K562 (cell line): ENCODE measurements at regions of chr6 and their contacts with region 1.

Region 1: DNA sequence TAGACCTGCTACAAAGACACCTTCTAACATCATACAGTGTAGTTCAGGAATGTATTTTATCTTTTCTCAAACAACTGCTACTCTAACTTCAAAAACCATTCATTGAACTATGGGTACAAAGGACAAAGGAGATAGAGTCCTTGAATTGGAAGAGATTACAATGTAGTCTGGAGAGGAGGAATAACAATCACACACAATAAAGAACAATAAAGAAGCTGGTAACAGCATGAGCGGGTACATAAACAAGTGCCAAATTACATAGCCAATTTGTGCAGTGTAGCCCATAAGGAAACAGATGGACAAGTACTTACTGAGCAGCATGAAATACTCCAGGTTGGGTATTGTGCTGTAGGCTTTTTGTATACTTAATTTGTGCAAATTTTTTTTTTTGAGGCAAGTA is 44.3 kb downstream of the OSTM1 start:
- DNase-seq: no peak
- ATAC-seq: no peak
- H3K4me3 ChIP-seq: no peak overlapping the region
- H3K27ac ChIP-seq: no peak overlapping the region
- H3K4me1 ChIP-seq: peaks cover 0 to 3% of the 10 kb centered on the region in 2 experiments; a peak in 1 of 5 replicates
- H3K27me3 ChIP-seq: no peaks in the 10 kb centered on the region
- CTCF ChIP-seq: no peak
- EP300 ChIP-seq: no peak
- POLR2A ChIP-seq: no peak
- RAD21 ChIP-seq: no peak

Region 2: GRCh38 chr6:107689951-107690642 is 340.1 kb before region 1 on chr6:
- CTCF ChIA-PET with region 1: no interaction called
- POLR2A ChIA-PET with region 1: no interaction called
- in situ Hi-C with region 1: loop called (anchors 10 kb)
- intact Hi-C with region 1: no loop called
- DNase-seq: no peak
- ATAC-seq: no peak
- H3K4me3 ChIP-seq: no peak overlapping the region
- H3K27ac ChIP-seq: no peak overlapping the region
- H3K4me1 ChIP-seq: no peaks in the 10 kb centered on the region; a peak in 1 of 5 replicates
- H3K27me3 ChIP-seq: peaks cover 9 to 38% of the 10 kb centered on the region in 2 experiments; a peak in 3 of 5 replicates
- CTCF ChIP-seq: no peak
- EP300 ChIP-seq: no peak
- POLR2A ChIP-seq: no peak
- RAD21 ChIP-seq: no peak

Region 3: DNA sequence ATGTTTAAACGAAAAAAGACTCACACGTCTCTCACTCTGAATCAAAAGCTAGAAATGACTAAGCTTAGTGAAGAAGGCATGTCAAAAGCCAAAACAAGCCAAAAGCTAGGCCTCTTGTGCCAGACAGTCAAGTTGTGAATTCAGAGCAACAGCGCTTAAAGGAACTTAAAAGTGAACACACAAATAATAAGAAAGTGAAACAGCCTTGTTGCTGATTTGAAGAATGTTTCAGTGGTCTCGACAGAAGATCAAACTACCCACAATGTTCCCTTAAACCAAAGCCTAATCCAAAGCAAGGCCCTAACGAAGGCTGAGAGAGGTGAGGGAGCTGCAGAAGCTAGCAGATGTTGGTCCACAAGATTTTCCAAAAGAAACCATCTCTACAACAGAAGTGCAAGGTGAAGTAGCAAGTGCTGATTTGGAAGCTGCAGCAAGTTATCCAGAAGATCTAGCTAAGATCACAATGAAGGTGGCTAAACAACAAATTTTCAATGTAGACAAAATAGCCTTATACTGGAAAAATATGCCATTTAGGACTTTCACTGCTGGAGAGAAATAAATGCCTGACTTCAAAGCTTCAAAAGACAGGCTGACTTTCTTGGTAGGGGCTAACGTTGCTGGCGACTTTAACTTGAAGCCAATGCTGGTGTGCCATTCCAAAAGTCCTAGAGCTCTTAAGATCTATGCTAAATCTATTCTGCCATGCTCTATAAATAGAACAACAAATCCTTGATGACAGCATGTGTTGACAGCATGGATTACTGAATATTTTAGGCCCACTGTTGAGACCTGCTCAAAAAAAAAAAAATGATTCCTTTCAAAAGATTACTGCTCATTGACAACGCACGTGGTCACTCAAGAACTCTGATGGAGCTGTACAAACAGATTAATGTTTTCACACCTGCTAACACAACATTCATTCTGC is 112.5 kb before region 1 on chr6:
- CTCF ChIA-PET with region 1: no interaction called
- POLR2A ChIA-PET with region 1: no interaction called
- in situ Hi-C with region 1: no loop called
- intact Hi-C with region 1: no loop called
- DNase-seq: no peak
- ATAC-seq: no peak
- H3K4me3 ChIP-seq: no peak overlapping the region
- H3K27ac ChIP-seq: no peak overlapping the region
- H3K4me1 ChIP-seq: no peaks in the 10 kb centered on the region; a peak in 1 of 5 replicates
- H3K27me3 ChIP-seq: no peaks in the 10 kb centered on the region
- CTCF ChIP-seq: no peak
- EP300 ChIP-seq: no peak
- POLR2A ChIP-seq: no peak
- RAD21 ChIP-seq: no peak

Region 4: DNA sequence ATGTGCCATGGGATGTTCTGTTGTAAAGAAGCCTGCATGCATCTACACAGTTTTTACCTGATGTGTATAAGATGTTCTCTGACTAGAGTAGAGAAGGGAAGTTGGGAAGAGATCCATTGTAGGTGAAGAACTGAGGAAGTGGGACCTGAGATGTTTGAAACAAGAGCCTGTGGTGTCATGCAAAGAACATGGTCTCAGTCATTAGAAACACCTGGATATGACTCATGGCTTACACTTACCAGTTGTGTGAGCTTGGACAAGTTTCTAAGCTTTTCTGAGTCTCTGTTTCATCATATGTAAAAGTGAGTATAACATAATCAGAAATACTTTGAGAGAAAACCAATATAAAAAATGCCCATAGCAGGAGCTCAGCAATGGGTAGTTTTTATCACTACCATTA is 20.3 kb before region 1 on chr6:
- CTCF ChIA-PET with region 1: no interaction called
- POLR2A ChIA-PET with region 1: no interaction called
- in situ Hi-C with region 1: no loop called
- intact Hi-C with region 1: no loop called
- DNase-seq: no peak
- ATAC-seq: no peak
- H3K4me3 ChIP-seq: no peak overlapping the region
- H3K27ac ChIP-seq: no peak overlapping the region
- H3K4me1 ChIP-seq: no peaks in the 10 kb centered on the region; a peak in 1 of 5 replicates
- H3K27me3 ChIP-seq: no peaks in the 10 kb centered on the region; a peak in 1 of 5 replicates
- CTCF ChIP-seq: no peak
- EP300 ChIP-seq: no peak
- POLR2A ChIP-seq: no peak
- RAD21 ChIP-seq: no peak